A673 (cell line): ENCODE measurements at regions of chr12 and their contacts with region 1.

Region 1: DNA sequence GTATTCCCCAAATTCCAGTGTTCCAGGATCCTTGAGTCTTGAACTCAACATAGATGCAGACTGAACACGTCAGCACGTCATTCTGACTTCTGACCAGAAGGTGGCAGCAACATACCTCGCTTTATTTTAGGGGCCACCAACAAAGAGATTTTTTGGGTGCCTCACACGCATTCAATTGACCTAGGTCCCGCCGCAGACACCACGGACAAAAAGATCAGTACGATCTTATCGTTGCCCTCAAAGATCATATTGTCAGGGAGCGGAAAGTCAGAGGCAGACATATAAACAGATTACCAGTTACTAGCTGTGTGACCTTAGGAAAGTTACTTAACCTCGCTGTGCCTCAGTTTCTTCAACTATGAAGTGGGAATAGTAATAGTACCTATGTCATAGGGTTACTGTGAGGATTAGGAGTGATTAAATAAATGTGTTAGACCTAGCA is 6.5 kb upstream of the PRPH start:
- DNase-seq: peak; percentile 68
- H3K4me3 ChIP-seq: no peak overlapping the region
- H3K27ac ChIP-seq: no peak overlapping the region
- H3K4me1 ChIP-seq: peaks cover 7% of the 10 kb centered on the region
- H3K27me3 ChIP-seq: no peaks in the 10 kb centered on the region
- CTCF ChIP-seq: peak; percentile 93

Region 2: DNA sequence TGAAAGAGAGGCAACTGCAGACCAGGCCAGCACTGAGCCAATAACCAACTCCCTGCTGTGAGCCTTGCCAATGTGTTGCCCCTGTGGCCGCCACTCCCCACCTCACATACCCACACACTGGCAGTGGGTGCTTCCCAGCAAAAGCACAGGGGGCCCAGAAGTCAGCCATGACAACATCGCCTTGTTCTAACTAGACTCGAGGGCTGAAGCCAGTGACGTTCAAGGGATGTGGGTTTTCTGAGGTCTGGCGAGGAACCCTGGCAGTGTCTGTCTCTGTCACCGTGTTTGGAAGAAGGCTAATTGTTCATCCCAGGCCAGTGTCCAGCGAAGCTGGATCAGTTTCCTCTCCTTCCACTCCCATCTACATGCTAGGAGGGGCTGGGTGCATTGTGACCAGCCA is 1896.9 kb before region 1 on chr12:
- CTCF ChIA-PET with region 1: no interaction called
- POLR2A ChIA-PET with region 1: no interaction called
- intact Hi-C with region 1: no loop called
- DNase-seq: no peak
- H3K4me3 ChIP-seq: no peak overlapping the region
- H3K27ac ChIP-seq: no peak overlapping the region
- H3K4me1 ChIP-seq: peaks cover 13% of the 10 kb centered on the region
- H3K27me3 ChIP-seq: no peaks in the 10 kb centered on the region
- CTCF ChIP-seq: no peak

Region 3: GRCh38 chr12:49342066-49342913 is 53.9 kb after region 1 on chr12:
- CTCF ChIA-PET with region 1: interaction called, 15 read pairs
- POLR2A ChIA-PET with region 1: no interaction called
- intact Hi-C with region 1: loop called (anchors 2 kb)
- DNase-seq: peak; percentile 94
- H3K4me3 ChIP-seq: peak overlapping the region; percentile 44
- H3K27ac ChIP-seq: no peak overlapping the region
- H3K4me1 ChIP-seq: peaks cover 38% of the 10 kb centered on the region
- H3K27me3 ChIP-seq: peaks cover 14% of the 10 kb centered on the region
- CTCF ChIP-seq: peak; percentile 95

Region 4: GRCh38 chr12:49482095-49483051 is 193.9 kb after region 1 on chr12:
- CTCF ChIA-PET with region 1: no interaction called
- POLR2A ChIA-PET with region 1: no interaction called
- intact Hi-C with region 1: no loop called
- DNase-seq: no peak
- H3K4me3 ChIP-seq: no peak overlapping the region
- H3K27ac ChIP-seq: no peak overlapping the region
- H3K4me1 ChIP-seq: peaks cover 13% of the 10 kb centered on the region
- H3K27me3 ChIP-seq: no peaks in the 10 kb centered on the region
- CTCF ChIP-seq: no peak